Transverse colon (tissue), 4 donors: ENCODE measurements at regions of chr19 and their contacts with region 1.

Region 1: DNA sequence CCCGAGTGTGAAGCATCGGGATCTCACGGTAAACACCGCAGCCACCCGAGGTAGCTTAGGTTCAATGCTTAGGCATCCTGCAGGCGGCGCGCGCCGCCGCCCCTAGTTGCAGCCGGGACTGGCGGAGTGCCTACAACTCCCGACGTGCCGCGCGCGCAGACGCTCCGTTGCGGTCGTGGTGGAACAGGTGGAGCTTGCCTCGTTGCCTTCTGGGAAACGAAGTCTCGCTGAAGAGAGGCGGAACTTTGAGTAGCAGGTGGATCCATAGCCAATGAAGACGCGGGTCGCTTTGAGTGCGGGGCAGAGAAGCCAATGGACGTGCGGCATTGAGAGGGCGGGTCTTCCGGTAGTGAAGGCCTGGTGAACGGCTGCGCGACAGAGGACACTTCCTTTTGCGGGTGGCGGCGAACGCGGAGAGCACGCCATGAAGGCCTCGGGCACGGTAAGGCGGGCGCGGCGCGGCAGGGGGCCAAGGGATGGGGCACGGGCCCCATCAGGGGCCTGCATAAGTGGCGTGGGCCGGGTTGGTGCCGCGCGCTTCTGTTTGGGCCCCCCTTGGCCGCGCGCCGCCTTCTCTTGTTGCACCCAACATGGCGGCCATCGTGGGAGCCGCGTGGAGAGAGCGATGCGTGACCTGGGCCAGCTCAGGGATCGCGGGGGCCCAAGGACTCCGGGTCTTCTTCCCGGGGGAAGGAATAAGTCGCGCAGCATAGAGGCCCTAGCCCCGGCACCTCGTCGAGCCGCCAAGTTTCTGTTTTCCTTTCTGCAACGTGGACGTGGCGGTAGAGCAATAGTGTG is at the start of gene RPL18A:
- DNase-seq: peak; percentile 99
- H3K4me3 ChIP-seq: peak within 1 kb of the TSS; percentile 89 to 97 (median 93)
- H3K27ac ChIP-seq: peak within 1 kb of the TSS; percentile 90 to 95 (median 92)
- H3K4me1 ChIP-seq: peaks cover 9 to 46% (median 23%) of the 10 kb centered on the region in 4 donors
- H3K27me3 ChIP-seq: no peaks in the 10 kb centered on the region
- CTCF ChIP-seq: peak; percentile 69 to 96 (median 81)
- EP300 ChIP-seq: no peak
- POLR2A ChIP-seq: peak; percentile 95
- total RNA-seq, gene RPL18A: 727 to 1,372 (median 1,071) TPM

Region 2: GRCh38 chr19:17703824-17704463 is 155.8 kb before region 1 on chr19:
- in situ Hi-C with region 1: loop called in 1 of 4 experiments (anchors 25 kb)
- intact Hi-C with region 1: loop called (anchors 5 kb)
- DNase-seq: peak; percentile 67
- H3K4me3 ChIP-seq: no peak overlapping the region
- H3K27ac ChIP-seq: no peak overlapping the region
- H3K4me1 ChIP-seq: no peaks in the 10 kb centered on the region
- H3K27me3 ChIP-seq: peaks cover 4% of the 10 kb centered on the region
- CTCF ChIP-seq: peak; percentile 80 to 89 (median 84)
- EP300 ChIP-seq: no peak
- POLR2A ChIP-seq: no peak

Region 3: GRCh38 chr19:17718947-17719711 is 140.6 kb before region 1 on chr19 and contains the start of gene MAP1S:
- in situ Hi-C with region 1: loop called in 1 of 4 experiments (anchors 25 kb)
- intact Hi-C with region 1: no loop called
- DNase-seq: peak; percentile 63
- H3K4me3 ChIP-seq: peak within 1 kb of the TSS; percentile 75 to 97 (median 87)
- H3K27ac ChIP-seq: peak within 1 kb of the TSS; percentile 72 to 86 (median 82)
- H3K4me1 ChIP-seq: peaks cover 19 to 46% (median 38%) of the 10 kb centered on the region in 4 donors
- H3K27me3 ChIP-seq: no peaks in the 10 kb centered on the region
- CTCF ChIP-seq: no peak
- EP300 ChIP-seq: no peak
- POLR2A ChIP-seq: peak; percentile 73
- total RNA-seq, gene MAP1S: 30.2 to 159 (median 68.0) TPM

Region 4: GRCh38 chr19:17902701-17903100 is 43.0 kb after region 1 on chr19:
- in situ Hi-C with region 1: no loop called
- intact Hi-C with region 1: no loop called
- DNase-seq: no peak
- H3K4me3 ChIP-seq: no peak overlapping the region
- H3K27ac ChIP-seq: no peak overlapping the region
- H3K4me1 ChIP-seq: no peaks in the 10 kb centered on the region
- H3K27me3 ChIP-seq: peaks cover 10% of the 10 kb centered on the region
- CTCF ChIP-seq: no peak
- EP300 ChIP-seq: no peak
- POLR2A ChIP-seq: no peak

Region 5: GRCh38 chr19:17932485-17933338 is 73.0 kb after region 1 on chr19 and contains the start of gene CCDC124:
- in situ Hi-C with region 1: loop called in 1 of 4 experiments (anchors 5 kb)
- intact Hi-C with region 1: no loop called
- DNase-seq: peak; percentile 95
- H3K4me3 ChIP-seq: peak within 1 kb of the TSS; percentile 64 to 92 (median 87)
- H3K27ac ChIP-seq: peak within 1 kb of the TSS; percentile 81 to 86 (median 84)
- H3K4me1 ChIP-seq: peaks cover 10 to 22% (median 16%) of the 10 kb centered on the region in 4 donors
- H3K27me3 ChIP-seq: no peaks in the 10 kb centered on the region
- CTCF ChIP-seq: peak; percentile 72 to 99 (median 93)
- EP300 ChIP-seq: no peak
- POLR2A ChIP-seq: peak; percentile 91
- total RNA-seq, gene CCDC124: 36.9 to 93.5 (median 41.4) TPM

Region 6: DNA sequence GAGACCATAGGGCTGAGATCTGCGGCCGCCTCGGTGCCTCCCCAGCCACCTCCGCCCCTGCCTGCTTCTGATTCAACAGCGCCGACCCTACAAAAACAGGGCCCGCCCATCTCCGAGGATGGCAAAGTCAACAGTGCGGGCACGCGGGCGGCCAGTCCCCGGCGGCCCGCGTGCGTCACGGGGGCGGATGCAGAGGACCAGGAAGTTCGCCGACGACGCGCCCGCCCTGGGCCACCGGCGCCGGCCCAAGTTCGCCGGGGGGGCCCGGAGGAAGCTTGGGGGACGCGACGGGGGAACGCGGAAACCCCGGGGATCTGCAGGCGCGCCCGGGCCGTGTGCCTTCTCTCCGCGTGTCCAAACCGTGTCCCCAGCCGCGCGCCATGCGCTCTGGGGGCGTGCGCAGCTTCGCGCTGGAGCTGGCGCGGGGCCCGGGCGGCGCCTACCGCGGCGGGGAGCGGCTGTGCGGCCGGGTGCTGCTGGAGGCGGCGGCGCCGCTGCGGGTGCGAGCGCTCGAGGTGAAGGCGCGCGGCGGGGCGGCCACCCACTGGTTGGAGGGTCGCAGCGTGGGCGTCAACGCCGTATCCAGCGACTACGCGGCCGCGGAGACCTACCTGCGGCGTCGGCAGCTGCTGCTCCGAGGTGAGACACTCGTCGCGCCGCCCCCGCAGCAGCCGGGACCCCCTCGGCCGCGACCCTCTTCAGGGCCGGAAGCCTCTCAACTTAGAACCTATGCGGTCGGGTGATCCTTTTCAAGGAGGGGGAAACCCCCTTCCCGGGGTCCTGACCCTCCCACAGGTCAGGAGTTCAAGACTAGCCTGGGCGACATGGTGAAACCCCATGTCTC is 141.4 kb after region 1 on chr19:
- in situ Hi-C with region 1: loop called in 2 of 4 experiments (anchors 10 to 25 kb)
- intact Hi-C with region 1: loop called (anchors 10 kb)
- DNase-seq: peak; percentile 95
- H3K4me3 ChIP-seq: peak overlapping the region; percentile 69 to 86 (median 78)
- H3K27ac ChIP-seq: peak overlapping the region; percentile 89 to 92 (median 90)
- H3K4me1 ChIP-seq: peaks cover 4 to 28% (median 19%) of the 10 kb centered on the region in 4 donors
- H3K27me3 ChIP-seq: no peaks in the 10 kb centered on the region
- CTCF ChIP-seq: no peak
- EP300 ChIP-seq: no peak
- POLR2A ChIP-seq: peak; percentile 84